ENCODE measurements at regions of chr6 and their contacts with region 1.

Region 1: DNA sequence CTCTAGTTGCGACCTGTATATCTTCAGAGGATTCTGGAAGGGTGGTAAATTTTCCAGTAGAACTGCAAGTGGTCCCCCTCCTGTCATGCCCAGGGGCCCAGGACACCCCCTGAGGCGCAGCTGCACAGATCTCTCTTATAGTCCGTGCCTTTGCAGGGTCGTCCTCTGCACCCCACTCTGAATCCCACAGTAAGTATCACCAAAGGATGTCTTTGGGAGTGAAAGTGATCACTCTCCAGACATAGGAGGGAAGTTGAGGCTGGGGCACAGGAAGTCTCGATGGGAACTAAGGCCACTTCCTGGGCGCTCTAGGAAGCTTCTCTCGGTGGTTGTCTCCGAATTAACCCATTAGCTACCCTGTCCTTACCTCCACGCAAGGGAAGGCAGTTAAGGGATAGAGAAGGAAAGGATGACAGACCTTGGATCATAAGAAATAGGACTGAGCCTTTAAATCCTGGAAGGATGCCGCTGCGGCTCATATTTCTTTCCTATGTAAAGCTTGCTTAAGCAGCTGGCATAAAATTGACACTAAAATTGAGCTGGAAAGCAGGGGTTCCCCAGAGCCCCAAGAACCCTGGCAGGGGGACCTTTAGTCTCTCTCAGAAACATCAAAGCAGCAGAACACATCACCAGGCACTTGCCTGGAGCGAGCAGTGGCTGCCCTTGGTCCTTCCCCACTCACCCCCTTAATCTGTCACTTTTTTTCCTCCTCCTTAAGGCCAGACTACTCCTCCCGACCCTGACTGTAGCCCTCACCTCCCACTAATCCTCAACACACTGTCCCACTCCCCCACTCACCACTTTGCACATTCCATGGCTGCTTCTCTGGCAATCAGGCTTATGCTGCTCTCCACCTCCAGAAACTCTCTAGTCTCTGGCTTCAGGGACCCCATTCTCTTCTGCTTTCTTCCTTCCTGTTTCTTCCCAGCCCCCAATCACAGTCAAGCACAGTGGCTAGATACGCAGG is at the start of gene ZKSCAN4:
- DNase-seq: peak; percentile 87 to 88
- H3K4me3 ChIP-seq: peak within 1 kb of the TSS; percentile 71
- H3K4me3 Mint-ChIP-seq: peak within 1 kb of the TSS; percentile 95
- H3K27ac Mint-ChIP-seq: peak within 1 kb of the TSS; percentile 82
- H3K4me1 ChIP-seq: peaks cover 4% of the 10 kb centered on the region; the same call in 1 of the 2 replicates
- H3K4me1 Mint-ChIP-seq: peaks cover 8% of the 10 kb centered on the region
- H3K27me3 ChIP-seq: no peaks in the 10 kb centered on the region
- H3K27me3 Mint-ChIP-seq: no peaks in the 10 kb centered on the region
- CTCF ChIP-seq: no peak
- total RNA-seq, gene ZKSCAN4: 5.0 and 5.5 TPM in 2 replicates

Region 2: GRCh38 chr6:28136585-28137504 is 115.4 kb before region 1 on chr6:
- CTCF ChIA-PET with region 1: no interaction called
- POLR2A ChIA-PET with region 1: no interaction called
- intact Hi-C with region 1: loop called (anchors 1 kb)
- DNase-seq: peak; percentile 84 to 87
- H3K4me3 ChIP-seq: peak overlapping the region; percentile 77
- H3K4me3 Mint-ChIP-seq: peak overlapping the region; percentile 96
- H3K27ac Mint-ChIP-seq: peak overlapping the region; percentile 93
- H3K4me1 ChIP-seq: peaks cover 6% of the 10 kb centered on the region; the same call in 1 of the 2 replicates
- H3K4me1 Mint-ChIP-seq: peaks cover 13% of the 10 kb centered on the region
- H3K27me3 ChIP-seq: no peaks in the 10 kb centered on the region
- H3K27me3 Mint-ChIP-seq: no peaks in the 10 kb centered on the region
- CTCF ChIP-seq: no peak

Region 3: GRCh38 chr6:28225056-28225834 is 27.0 kb before region 1 on chr6 and contains the start of gene ZSCAN9:
- CTCF ChIA-PET with region 1: no interaction called
- POLR2A ChIA-PET with region 1: no interaction called
- intact Hi-C with region 1: loop called (anchors 1 kb)
- DNase-seq: peak; percentile 88 to 90
- H3K4me3 ChIP-seq: peak within 1 kb of the TSS; percentile 72
- H3K4me3 Mint-ChIP-seq: peak within 1 kb of the TSS; percentile 96
- H3K27ac Mint-ChIP-seq: peak within 1 kb of the TSS; percentile 82
- H3K4me1 ChIP-seq: peaks cover 5% of the 10 kb centered on the region; the same call in 1 of the 2 replicates
- H3K4me1 Mint-ChIP-seq: peaks cover 9% of the 10 kb centered on the region
- H3K27me3 ChIP-seq: peaks cover 1% of the 10 kb centered on the region; the same call in 1 of the 2 replicates
- H3K27me3 Mint-ChIP-seq: no peaks in the 10 kb centered on the region
- CTCF ChIP-seq: no peak
- total RNA-seq, gene ZSCAN9: 13.7 and 13.9 TPM in 2 replicates

Region 4: DNA sequence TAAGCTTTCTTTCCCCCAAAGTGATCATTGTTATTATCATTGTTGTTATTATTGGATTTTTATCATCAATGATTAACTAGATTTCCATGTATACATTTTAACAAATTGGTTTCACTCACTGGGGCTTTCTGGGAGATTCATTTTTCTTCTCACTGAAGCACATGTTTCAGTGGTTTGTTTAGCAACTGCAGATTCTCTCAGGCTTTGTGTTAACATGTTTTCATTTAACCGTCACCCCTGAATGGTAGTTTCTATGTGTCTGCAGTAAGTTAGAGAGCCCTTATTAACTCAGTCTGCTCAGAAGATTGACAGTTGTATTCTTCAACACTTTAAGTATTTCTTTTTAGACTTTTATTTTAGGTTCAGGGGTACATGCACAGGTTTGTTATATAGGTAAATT is 12.7 kb before region 1 on chr6:
- CTCF ChIA-PET with region 1: no interaction called
- POLR2A ChIA-PET with region 1: no interaction called
- intact Hi-C with region 1: no loop called
- DNase-seq: no peak
- H3K4me3 ChIP-seq: no peak overlapping the region
- H3K4me3 Mint-ChIP-seq: no peak overlapping the region
- H3K27ac Mint-ChIP-seq: no peak overlapping the region
- H3K4me1 ChIP-seq: no peaks in the 10 kb centered on the region
- H3K4me1 Mint-ChIP-seq: no peaks in the 10 kb centered on the region
- H3K27me3 ChIP-seq: no peaks in the 10 kb centered on the region
- H3K27me3 Mint-ChIP-seq: no peaks in the 10 kb centered on the region
- CTCF ChIP-seq: no peak

Region 5: GRCh38 chr6:28266962-28267694 is 14.8 kb after region 1 on chr6 and contains the start of gene ZSCAN26:
- CTCF ChIA-PET with region 1: interaction called, 4 read pairs
- POLR2A ChIA-PET with region 1: interaction called, 7 read pairs
- intact Hi-C with region 1: loop called (anchors 1 kb)
- DNase-seq: peak; percentile 92
- H3K4me3 ChIP-seq: peak within 1 kb of the TSS; percentile 57
- H3K4me3 Mint-ChIP-seq: no peak within 1 kb of the TSS
- H3K27ac Mint-ChIP-seq: no peak within 1 kb of the TSS
- H3K4me1 ChIP-seq: peaks cover 15% of the 10 kb centered on the region
- H3K4me1 Mint-ChIP-seq: no peaks in the 10 kb centered on the region
- H3K27me3 ChIP-seq: no peaks in the 10 kb centered on the region
- H3K27me3 Mint-ChIP-seq: no peaks in the 10 kb centered on the region
- CTCF ChIP-seq: no peak
- total RNA-seq, gene ZSCAN26: 7.2 and 7.8 TPM in 2 replicates

Region 6: DNA sequence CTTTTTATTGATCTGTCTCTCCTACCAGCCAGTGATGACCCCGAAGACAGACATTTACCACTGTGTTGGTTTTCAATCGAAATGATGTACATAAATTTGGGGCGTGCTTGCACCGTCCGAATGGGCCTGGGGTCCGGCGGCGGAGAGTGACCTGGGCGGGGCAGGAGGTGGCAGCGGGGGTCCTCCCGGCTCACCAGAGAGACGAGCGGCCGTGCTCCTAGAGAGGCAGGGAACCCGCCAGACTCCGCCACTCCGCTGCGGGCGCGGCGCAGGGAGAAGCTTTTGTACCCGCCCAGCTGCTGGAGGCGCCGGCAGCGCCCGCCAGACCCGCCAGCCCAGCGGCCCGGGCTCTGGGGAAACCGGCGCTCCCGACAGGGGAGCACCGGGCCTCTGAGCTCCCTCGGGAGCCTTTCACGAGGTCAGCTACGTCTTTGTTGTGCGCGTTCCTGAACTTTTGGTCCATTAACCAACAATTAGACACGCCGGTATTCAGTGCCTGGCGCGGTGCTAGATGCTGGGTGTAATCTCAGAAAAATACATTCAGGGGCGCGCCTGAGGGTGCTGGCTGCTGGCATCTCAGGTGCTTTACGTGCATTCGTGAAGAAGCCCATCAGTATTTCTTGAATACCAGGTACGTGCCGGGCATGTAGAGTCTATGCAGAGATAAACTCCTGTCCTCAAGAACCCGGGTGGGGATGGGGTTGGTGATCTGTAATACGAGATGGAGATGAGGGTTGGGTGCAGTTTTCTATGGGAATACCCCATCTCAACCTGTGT is 29.2 kb after region 1 on chr6 and contains the start of gene PGBD1:
- CTCF ChIA-PET with region 1: no interaction called
- POLR2A ChIA-PET with region 1: no interaction called
- intact Hi-C with region 1: loop called (anchors 1 kb)
- DNase-seq: peak; percentile 81 to 84
- H3K4me3 ChIP-seq: peak within 1 kb of the TSS; percentile 74
- H3K4me3 Mint-ChIP-seq: peak within 1 kb of the TSS; percentile 85
- H3K27ac Mint-ChIP-seq: no peak within 1 kb of the TSS
- H3K4me1 ChIP-seq: 0 out of 2 replicates have a peak, but pooled peaks cover 4% of the 10 kb centered on the region
- H3K4me1 Mint-ChIP-seq: peaks cover 10% of the 10 kb centered on the region
- H3K27me3 ChIP-seq: no peaks in the 10 kb centered on the region
- H3K27me3 Mint-ChIP-seq: no peaks in the 10 kb centered on the region
- CTCF ChIP-seq: no peak
- total RNA-seq, gene PGBD1: 3.6 and 3.8 TPM in 2 replicates